ENCODE measurements at regions of chr6 and their contacts with region 1.

Region 1: DNA sequence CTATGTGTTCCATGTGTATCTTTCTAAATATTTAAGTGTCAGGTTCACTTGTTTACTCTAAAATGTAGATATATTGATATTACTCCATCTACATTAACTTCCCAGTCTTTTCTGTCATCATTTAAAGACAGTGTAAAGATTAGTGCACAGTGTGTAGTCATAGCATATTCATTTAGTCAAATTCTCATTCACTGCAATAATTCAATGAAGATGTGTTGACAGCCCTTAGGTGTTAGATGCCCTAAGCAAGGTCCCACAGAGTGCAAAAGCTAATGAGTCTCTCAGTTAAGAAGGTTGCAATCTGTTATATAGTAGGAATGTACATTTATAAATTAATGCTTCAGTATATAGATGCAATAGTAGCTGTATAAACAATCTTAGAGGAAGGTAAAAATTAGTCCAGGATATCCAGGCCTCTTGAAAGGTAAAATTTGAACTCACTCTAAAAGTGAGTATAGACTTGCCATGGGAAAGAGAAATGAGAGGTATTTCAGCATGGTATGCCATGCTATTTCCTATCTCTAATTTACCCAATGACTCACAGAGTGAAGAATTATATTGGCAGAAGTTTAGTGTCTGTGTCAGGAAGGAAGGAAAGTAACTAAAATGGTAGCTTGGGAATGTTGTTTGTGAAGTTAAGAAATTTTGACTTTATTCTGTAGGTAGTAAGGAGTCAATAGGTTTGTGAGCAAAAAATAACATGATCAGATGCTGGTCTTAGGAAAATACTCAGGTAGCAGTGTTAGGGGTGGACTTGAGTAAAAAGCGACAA is 969.9 kb upstream of the CITED2 start:
- DNase-seq: peak; percentile 70
- H3K4me3 ChIP-seq: no peak overlapping the region
- H3K27ac ChIP-seq: peak overlapping the region; percentile 77
- H3K4me1 ChIP-seq: peaks cover 40% of the 10 kb centered on the region
- H3K27me3 ChIP-seq: no peaks in the 10 kb centered on the region
- CTCF ChIP-seq: no peak
- POLR2A ChIP-seq: peak; percentile 39

Region 2: GRCh38 chr6:139764498-139764986 is 579.8 kb before region 1 on chr6:
- CTCF ChIA-PET with region 1: no interaction called
- POLR2A ChIA-PET with region 1: no interaction called
- dilution Hi-C with region 1: no loop called
- intact Hi-C with region 1: loop called (anchors 1 kb)
- DNase-seq: peak; percentile 91
- H3K4me3 ChIP-seq: no peak overlapping the region
- H3K27ac ChIP-seq: peak overlapping the region; percentile 96
- H3K4me1 ChIP-seq: peaks cover 42% of the 10 kb centered on the region
- H3K27me3 ChIP-seq: no peaks in the 10 kb centered on the region
- CTCF ChIP-seq: no peak
- POLR2A ChIP-seq: peak; percentile 63

Region 3: GRCh38 chr6:139973669-139974344 is 370.5 kb before region 1 on chr6:
- CTCF ChIA-PET with region 1: no interaction called
- POLR2A ChIA-PET with region 1: no interaction called
- dilution Hi-C with region 1: no loop called
- intact Hi-C with region 1: loop called (anchors 1 kb)
- DNase-seq: peak; percentile 90
- H3K4me3 ChIP-seq: no peak overlapping the region
- H3K27ac ChIP-seq: peak overlapping the region; percentile 49
- H3K4me1 ChIP-seq: peaks cover 12% of the 10 kb centered on the region
- H3K27me3 ChIP-seq: no peaks in the 10 kb centered on the region
- CTCF ChIP-seq: no peak
- POLR2A ChIP-seq: no peak

Region 4: GRCh38 chr6:140138311-140139010 is 205.9 kb before region 1 on chr6:
- CTCF ChIA-PET with region 1: interaction called, 3 read pairs
- POLR2A ChIA-PET with region 1: no interaction called
- dilution Hi-C with region 1: no loop called
- intact Hi-C with region 1: loop called (anchors 1 kb)
- DNase-seq: peak; percentile 70
- H3K4me3 ChIP-seq: no peak overlapping the region
- H3K27ac ChIP-seq: peak overlapping the region; percentile 98
- H3K4me1 ChIP-seq: peaks cover 10% of the 10 kb centered on the region
- H3K27me3 ChIP-seq: no peaks in the 10 kb centered on the region
- CTCF ChIP-seq: no peak
- POLR2A ChIP-seq: no peak

Region 5: GRCh38 chr6:140393665-140394540 is 49.6 kb after region 1 on chr6:
- CTCF ChIA-PET with region 1: interaction called, 5 read pairs
- POLR2A ChIA-PET with region 1: interaction called, 3 read pairs
- dilution Hi-C with region 1: no loop called
- intact Hi-C with region 1: loop called (anchors 2 kb)
- DNase-seq: peak; percentile 93
- H3K4me3 ChIP-seq: no peak overlapping the region
- H3K27ac ChIP-seq: peak overlapping the region; percentile 30
- H3K4me1 ChIP-seq: peaks cover 14% of the 10 kb centered on the region
- H3K27me3 ChIP-seq: no peaks in the 10 kb centered on the region
- CTCF ChIP-seq: no peak
- POLR2A ChIP-seq: no peak

Region 6: DNA sequence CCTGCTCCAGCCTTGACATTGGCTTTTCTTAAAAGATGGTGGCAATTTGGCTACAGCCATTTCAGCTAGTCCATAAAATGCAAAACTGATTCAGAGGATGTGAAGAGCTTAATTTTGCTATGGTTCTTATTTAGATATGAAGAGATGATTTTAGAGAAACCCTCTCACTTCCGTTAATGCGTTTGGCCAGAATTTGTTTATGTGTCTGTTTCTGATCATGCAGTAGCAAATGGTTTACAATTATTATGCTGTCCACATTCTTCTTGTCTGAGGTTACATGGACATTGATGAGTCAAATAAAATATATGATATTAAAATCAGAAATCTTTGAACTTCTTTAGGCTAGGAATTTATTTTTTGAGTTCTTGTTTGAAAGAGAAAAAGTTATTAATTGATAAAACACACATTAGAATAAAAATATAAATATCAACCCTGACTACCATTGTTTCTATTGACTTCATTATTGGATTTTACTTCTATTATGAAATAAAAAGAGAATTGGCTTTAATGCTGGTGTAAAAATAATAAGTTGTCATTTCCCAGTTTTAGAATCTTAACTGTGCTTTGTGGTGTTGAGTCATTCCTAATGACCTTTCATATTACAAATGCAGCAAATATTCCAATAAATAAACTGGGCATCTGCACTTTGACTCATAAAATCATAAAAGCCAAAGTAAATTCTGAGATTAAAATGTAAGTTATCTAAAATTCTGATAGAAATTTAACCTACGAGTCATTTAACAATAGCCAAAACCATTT is 502.4 kb after region 1 on chr6:
- CTCF ChIA-PET with region 1: no interaction called
- POLR2A ChIA-PET with region 1: no interaction called
- dilution Hi-C with region 1: no loop called
- intact Hi-C with region 1: loop called (anchors 2 kb)
- DNase-seq: peak; percentile 64
- H3K4me3 ChIP-seq: no peak overlapping the region
- H3K27ac ChIP-seq: peak overlapping the region; percentile 78
- H3K4me1 ChIP-seq: peaks cover 47% of the 10 kb centered on the region
- H3K27me3 ChIP-seq: no peaks in the 10 kb centered on the region
- CTCF ChIP-seq: no peak
- POLR2A ChIP-seq: no peak

Measured in endothelial cell of umbilical vein (primary cell).